ENCODE measurements at regions of chr9 and their contacts with region 1.

Region 1: GRCh38 chr9:99162759-99163364 is 57.9 kb downstream of the TGFBR1 start:
- DNase-seq: peak; percentile 25
- ATAC-seq: peak; percentile 41
- H3K4me3 Mint-ChIP-seq: no peak overlapping the region
- H3K27ac Mint-ChIP-seq: no peak overlapping the region
- H3K4me1 Mint-ChIP-seq: peaks cover 42% of the 10 kb centered on the region
- H3K27me3 Mint-ChIP-seq: peaks cover 1% of the 10 kb centered on the region
- CTCF ChIP-seq: peak; percentile 88

Region 2: GRCh38 chr9:99173570-99174504 is 11.0 kb after region 1 on chr9:
- CTCF ChIA-PET with region 1: interaction called, 24 read pairs
- POLR2A ChIA-PET with region 1: interaction called, 4 read pairs
- intact Hi-C with region 1: no loop called
- DNase-seq: peak; percentile 32
- ATAC-seq: peak; percentile 83
- H3K4me3 Mint-ChIP-seq: no peak overlapping the region
- H3K27ac Mint-ChIP-seq: peak overlapping the region; percentile 50
- H3K4me1 Mint-ChIP-seq: peaks cover 30% of the 10 kb centered on the region
- H3K27me3 Mint-ChIP-seq: no peaks in the 10 kb centered on the region
- CTCF ChIP-seq: no peak